ENCODE measurements at regions of chr9 and their contacts with region 1.

Region 1: GRCh38 chr9:115864581-115864980 is 289.0 kb upstream of the PAPPA start:
- DNase-seq: no peak
- ATAC-seq: no peak
- H3K4me3 ChIP-seq: no peak overlapping the region
- H3K27ac ChIP-seq: no peak overlapping the region
- H3K4me1 ChIP-seq: no peaks in the 10 kb centered on the region
- H3K27me3 ChIP-seq: no peaks in the 10 kb centered on the region

Region 2: DNA sequence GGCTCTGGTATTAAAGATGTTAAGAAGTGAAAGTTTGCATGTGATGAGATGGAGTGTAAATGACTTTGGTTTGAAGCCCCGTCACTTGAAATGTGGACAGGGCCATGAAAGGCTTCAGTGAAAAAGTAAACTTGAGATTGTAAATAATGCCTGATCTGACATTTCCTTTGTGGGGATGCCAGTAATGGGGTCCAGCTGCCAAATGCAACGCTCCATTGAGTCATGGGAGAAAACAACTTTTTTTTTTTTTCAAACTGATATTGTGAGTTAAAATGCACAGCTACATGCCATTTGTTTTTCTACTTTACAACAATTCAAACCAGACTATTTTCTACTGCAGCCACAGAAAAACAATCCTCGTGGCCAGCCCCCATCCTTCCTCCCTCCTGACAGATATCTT is 419.6 kb before region 1 on chr9:
- intact Hi-C with region 1: no loop called
- DNase-seq: no peak
- ATAC-seq: no peak
- H3K4me3 ChIP-seq: no peak overlapping the region
- H3K27ac ChIP-seq: no peak overlapping the region
- H3K4me1 ChIP-seq: peaks cover 0 to 3% of the 10 kb centered on the region in 2 donors
- H3K27me3 ChIP-seq: no peaks in the 10 kb centered on the region

Region 3: DNA sequence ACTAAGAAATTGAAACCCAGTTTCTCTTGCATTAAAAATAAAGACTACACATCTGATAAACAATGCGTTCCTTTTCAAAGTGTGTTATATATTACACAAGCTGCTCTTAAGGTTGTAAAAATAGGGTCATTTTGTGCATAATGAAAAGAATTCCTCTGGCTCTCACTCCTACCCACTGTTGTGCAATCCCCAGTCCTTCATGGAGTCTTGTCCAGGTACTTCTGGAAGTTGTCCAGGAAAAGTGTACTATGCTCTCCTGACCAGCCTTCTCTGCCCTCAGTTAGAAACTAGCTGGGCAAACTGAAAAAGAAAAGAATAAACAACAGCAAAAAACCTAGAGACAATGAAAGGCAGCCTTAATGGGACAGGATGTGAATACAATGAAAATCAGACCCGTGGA is 56.5 kb before region 1 on chr9:
- intact Hi-C with region 1: loop called in 1 of 2 experiments (anchors 10 kb)
- DNase-seq: no peak
- ATAC-seq: no peak
- H3K4me3 ChIP-seq: no peak overlapping the region
- H3K27ac ChIP-seq: no peak overlapping the region
- H3K4me1 ChIP-seq: no peaks in the 10 kb centered on the region
- H3K27me3 ChIP-seq: no peaks in the 10 kb centered on the region

Measured in aorta (tissue), 5 donors.